Panc1 (cell line): ENCODE measurements at regions of chr16 and their contacts with region 1.

Region 1: DNA sequence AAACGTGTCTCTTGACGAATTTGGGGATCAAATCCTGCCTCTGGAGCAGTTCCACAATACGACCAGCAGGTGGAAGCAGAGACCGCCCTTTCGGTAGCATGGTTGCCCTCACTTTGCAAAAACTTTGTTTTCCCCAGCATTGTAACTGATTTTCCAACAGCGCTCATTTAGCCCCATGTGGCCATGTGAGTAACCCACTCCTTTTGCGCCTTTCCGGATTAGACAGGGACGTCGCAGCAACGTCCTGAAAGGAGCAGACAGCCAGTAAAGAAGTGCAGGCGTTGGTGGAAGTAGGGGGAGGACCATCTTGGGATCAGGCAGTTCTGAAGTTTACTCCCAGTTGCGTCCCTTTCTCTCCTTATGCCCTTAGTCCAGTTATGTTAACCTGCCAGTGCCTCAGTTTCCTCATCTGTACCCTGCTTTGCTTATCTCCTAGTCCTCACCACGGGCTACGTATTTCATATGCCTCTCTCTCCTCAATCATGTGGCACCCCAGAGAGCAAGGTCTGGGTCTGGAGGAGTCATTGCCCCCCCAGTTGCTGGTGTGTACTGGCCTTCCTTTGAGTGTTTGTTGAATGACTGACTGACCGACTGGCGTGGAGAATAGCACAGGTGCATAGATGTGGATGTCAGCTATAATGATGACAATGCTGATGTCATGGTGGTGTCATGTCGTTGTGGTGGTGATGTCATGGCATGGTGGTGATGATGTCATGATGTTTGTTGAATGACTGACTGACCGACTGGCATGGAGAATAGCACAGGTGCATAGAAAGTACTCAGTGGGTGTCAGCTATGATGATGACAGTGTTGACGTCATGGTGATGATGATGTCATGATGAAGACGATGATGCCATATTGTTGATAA is 22.3 kb downstream of the TMEM114 start:
- DNase-seq: peak; percentile 80
- ATAC-seq: peak; percentile 95
- H3K4me3 ChIP-seq: no peak overlapping the region
- H3K27ac ChIP-seq: no peak overlapping the region
- H3K4me1 ChIP-seq: no peaks in the 10 kb centered on the region; the same call in 1 of the 2 replicates
- H3K27me3 ChIP-seq: no peaks in the 10 kb centered on the region
- CTCF ChIP-seq: peak; percentile 96

Region 2: DNA sequence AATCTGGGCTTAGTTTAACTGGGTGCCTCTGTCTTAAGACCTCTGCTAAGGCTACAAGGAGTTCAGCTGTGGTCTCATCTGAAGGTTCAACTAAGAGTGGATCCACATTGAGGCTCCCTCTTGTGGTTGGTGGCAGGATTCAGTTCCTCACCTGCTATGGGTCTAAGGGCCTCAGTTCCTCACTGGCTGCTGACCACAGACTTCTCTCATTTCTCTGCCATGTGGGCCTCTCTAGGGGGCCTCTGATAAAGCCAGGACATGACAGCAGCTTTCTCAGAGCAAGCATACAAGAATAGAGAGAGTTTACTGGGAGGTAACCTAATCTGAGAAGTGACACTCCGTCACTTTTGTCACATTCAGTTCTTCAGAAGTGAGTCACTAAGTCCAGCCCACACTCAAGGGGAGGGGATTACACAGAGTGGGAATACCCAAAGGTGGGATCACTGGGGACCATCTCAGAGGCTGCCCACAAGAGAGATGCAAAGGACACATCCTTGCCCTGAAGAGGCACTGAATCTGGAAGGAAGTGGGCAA is 87.3 kb after region 1 on chr16:
- CTCF ChIA-PET with region 1: interaction called, 3 read pairs
- POLR2A ChIA-PET with region 1: no interaction called
- in situ Hi-C with region 1: no loop called
- intact Hi-C with region 1: loop called (anchors 5 kb)
- DNase-seq: no peak
- ATAC-seq: peak; percentile 80
- H3K4me3 ChIP-seq: no peak overlapping the region
- H3K27ac ChIP-seq: no peak overlapping the region
- H3K4me1 ChIP-seq: no peaks in the 10 kb centered on the region
- H3K27me3 ChIP-seq: no peaks in the 10 kb centered on the region
- CTCF ChIP-seq: peak; percentile 79

Region 3: GRCh38 chr16:8797364-8798173 is 229.6 kb after region 1 on chr16 and contains the starts of genes PMM2 and TMEM186:
- CTCF ChIA-PET with region 1: no interaction called
- POLR2A ChIA-PET with region 1: no interaction called
- in situ Hi-C with region 1: no loop called
- intact Hi-C with region 1: loop called (anchors 2 kb)
- DNase-seq: peak; percentile 88
- ATAC-seq: peak; percentile 99
- H3K4me3 ChIP-seq: peak within 1 kb of the TSS; percentile 94 to 99
- H3K27ac ChIP-seq: peak within 1 kb of the TSS; percentile 98
- H3K4me1 ChIP-seq: peaks cover 20% of the 10 kb centered on the region
- H3K27me3 ChIP-seq: no peaks in the 10 kb centered on the region
- CTCF ChIP-seq: no peak
- total RNA-seq, gene PMM2: 58.4 TPM
- total RNA-seq, gene TMEM186: 12.4 TPM

Region 4: GRCh38 chr16:8880839-8881510 is 313.0 kb after region 1 on chr16:
- CTCF ChIA-PET with region 1: no interaction called
- POLR2A ChIA-PET with region 1: no interaction called
- in situ Hi-C with region 1: no loop called
- intact Hi-C with region 1: loop called (anchors 5 kb)
- DNase-seq: no peak
- ATAC-seq: no peak
- H3K4me3 ChIP-seq: no peak overlapping the region
- H3K27ac ChIP-seq: no peak overlapping the region
- H3K4me1 ChIP-seq: peaks cover 3% of the 10 kb centered on the region; the same call in 1 of the 2 replicates
- H3K27me3 ChIP-seq: no peaks in the 10 kb centered on the region
- CTCF ChIP-seq: no peak